Right cardiac atrium (tissue), 5 donors: ENCODE measurements at regions of chr9 and their contacts with region 1.

Region 1: DNA sequence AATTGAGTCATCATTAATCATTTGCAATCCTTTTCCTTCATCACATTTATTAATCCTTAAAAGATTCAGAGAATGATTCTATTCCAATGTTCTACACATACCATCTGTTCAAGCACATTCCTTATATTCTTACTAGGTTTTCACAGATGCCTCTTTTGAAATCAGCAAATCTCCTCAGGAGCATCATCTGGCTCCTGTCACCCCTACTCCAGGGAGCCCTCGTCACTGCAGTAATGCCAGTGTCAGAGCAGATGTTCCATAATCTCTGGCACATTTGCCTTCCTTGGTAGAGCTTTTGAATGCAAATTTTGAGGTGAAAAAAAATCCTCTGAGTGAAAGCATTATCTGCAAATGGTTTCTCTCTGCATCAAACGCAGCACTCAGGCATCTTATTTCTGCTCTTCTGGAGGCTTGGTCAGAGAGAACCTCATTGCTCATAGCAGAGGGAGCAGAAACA is 7.6 kb upstream of the KCNV2 start:
- DNase-seq: no peak
- ATAC-seq: no peak
- H3K4me3 ChIP-seq: no peak overlapping the region
- H3K27ac ChIP-seq: no peak overlapping the region
- H3K4me1 ChIP-seq: no peaks in the 10 kb centered on the region
- H3K27me3 ChIP-seq: no peaks in the 10 kb centered on the region

Region 2: DNA sequence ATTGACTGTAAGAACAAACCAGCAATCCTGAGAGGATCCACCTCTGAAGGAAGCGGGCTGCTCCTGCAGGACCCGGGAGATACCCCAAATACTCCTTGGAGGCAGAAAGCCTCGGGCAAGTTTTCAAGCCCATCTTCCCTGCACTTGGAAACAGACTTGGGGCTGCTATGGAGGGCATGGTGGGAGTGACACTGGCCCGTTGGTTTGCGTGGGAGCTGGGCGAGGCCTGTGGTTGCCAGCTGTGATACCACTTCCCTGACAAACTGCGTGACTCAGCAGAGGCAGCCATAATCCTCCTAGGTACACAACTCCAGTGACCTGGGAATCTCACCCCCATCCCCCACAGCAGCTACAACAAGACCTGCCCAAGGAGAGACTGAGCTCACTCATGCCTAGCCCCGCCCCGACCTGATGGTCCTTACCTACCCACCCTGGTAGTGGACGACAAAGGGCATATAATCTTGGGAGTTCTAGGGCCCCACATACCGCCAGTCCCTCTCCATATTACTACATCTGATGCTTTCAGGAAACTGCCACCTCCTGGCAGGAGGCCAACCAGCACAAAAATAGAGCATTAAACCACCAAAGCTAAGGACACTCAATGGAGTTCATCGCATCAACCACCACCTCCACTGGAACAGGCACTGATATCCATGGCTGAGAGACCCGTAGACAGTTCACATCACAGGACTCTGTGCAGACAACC is 126.2 kb before region 1 on chr9:
- intact Hi-C with region 1: no loop called
- DNase-seq: peak in 2 of 3 donors; percentile 50 to 83
- ATAC-seq: peak; percentile 47 to 84
- H3K4me3 ChIP-seq: no peak overlapping the region
- H3K27ac ChIP-seq: peak overlapping the region; percentile 28
- H3K4me1 ChIP-seq: no peaks in the 10 kb centered on the region
- H3K27me3 ChIP-seq: no peaks in the 10 kb centered on the region

Region 3: GRCh38 chr9:2664384-2665065 is 45.1 kb before region 1 on chr9:
- intact Hi-C with region 1: loop called in 1 of 4 experiments (anchors 5 kb)
- DNase-seq: no peak
- ATAC-seq: peak in 1 of 2 donors; percentile 20
- H3K4me3 ChIP-seq: no peak overlapping the region
- H3K27ac ChIP-seq: peak overlapping the region; percentile 97
- H3K4me1 ChIP-seq: peaks cover 10% of the 10 kb centered on the region
- H3K27me3 ChIP-seq: no peaks in the 10 kb centered on the region